ENCODE measurements at regions of chr16 and their contacts with region 1.

Region 1: DNA sequence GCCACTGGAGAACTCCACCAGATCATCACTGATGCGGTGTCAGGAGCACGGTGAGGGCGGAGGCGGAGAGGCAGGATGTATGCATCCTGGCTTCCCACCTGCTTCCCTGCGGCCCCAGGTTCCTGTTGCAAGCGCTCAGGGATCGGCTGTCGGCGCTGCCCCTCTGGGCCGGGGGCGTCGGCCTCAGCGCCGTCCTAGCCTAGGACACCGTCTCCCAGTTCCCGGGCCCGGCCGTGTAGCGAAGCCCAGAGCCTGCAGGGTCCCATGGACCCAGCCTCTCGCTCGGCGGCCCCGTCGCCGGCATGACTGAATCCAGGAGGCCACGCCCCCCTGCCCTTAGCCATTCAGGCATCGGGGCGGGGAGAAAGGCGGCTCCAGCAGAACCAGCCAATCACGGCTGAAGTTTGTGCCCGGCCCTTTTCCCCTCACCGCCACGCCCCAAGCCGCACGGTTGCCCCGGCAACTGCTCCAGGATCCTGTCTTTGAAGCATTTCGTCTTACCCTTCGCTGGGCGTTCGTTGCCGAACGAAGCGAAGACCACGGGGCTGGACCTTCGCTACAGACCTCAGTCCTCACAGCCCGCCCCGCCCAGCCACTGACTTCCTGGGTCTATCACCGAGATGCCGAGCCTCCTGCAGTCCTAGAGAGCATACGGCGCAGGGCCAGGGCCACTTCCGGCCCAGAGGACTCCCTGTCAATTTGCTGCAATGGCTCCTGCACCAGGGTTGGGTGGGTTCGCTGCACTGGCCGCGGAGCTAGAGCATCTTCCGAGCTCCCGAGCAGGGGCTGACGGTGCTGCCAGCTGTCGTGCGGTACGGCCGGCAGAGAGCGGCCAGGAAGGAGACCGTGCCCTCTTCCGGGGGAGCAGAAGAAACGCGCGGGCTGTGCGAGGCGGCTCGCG is 10.6 kb upstream of the ZNF213 start:
- DNase-seq: peak; percentile 87 to 98
- H3K4me3 ChIP-seq: peak overlapping the region; percentile 43 to 76 (median 67)
- H3K27ac ChIP-seq: no peak overlapping the region
- H3K4me1 ChIP-seq: peaks cover 0 to 11% (median 4%) of the 10 kb centered on the region in 4 experiments; a peak in 5 of 7 replicates
- H3K27me3 ChIP-seq: no peaks in the 10 kb centered on the region
- CTCF ChIP-seq: peak; percentile 10 to 16 (median 11); a peak in 3 of 4 replicates
- EP300 ChIP-seq: no peak
- POLR2A ChIP-seq: peak in 1 of 2 experiments; percentile 71; a peak in 1 of 3 replicates
- RAD21 ChIP-seq: peak in 1 of 2 experiments; percentile 21; a peak in 1 of 4 replicates

Region 2: GRCh38 chr16:3106205-3106928 is 17.9 kb before region 1 on chr16:
- CTCF ChIA-PET with region 1: interaction called, 619 read pairs
- POLR2A ChIA-PET with region 1: interaction called, 168 read pairs
- DNase-seq: peak in 1 of 2 experiments; percentile 97
- H3K4me3 ChIP-seq: peak overlapping the region; percentile 41 to 79 (median 64)
- H3K27ac ChIP-seq: peak overlapping the region; percentile 85
- H3K4me1 ChIP-seq: peaks cover 2 to 5% (median 4%) of the 10 kb centered on the region in 4 experiments; a peak in 5 of 7 replicates
- H3K27me3 ChIP-seq: no peaks in the 10 kb centered on the region
- CTCF ChIP-seq: no peak
- EP300 ChIP-seq: no peak
- POLR2A ChIP-seq: no peak; a peak in 1 of 3 replicates
- RAD21 ChIP-seq: no peak

Region 3: GRCh38 chr16:3112058-3112880 is 12.0 kb before region 1 on chr16 and contains the start of gene ZNF205:
- CTCF ChIA-PET with region 1: interaction called, 619 read pairs
- POLR2A ChIA-PET with region 1: interaction called, 168 read pairs
- DNase-seq: peak in 1 of 2 experiments; percentile 92
- H3K4me3 ChIP-seq: peak within 1 kb of the TSS; percentile 85 to 93 (median 92)
- H3K27ac ChIP-seq: peak within 1 kb of the TSS; percentile 51; the same call in 1 of the 2 replicates
- H3K4me1 ChIP-seq: peaks cover 0 to 15% (median 8%) of the 10 kb centered on the region in 4 experiments; a peak in 5 of 7 replicates
- H3K27me3 ChIP-seq: no peaks in the 10 kb centered on the region
- CTCF ChIP-seq: 0 out of 4 replicates have a peak, but pooled peaks of 1 of the 3 experiments have one; percentile 14
- EP300 ChIP-seq: peak in 1 of 2 experiments; percentile 79; a peak in 1 of 3 replicates
- POLR2A ChIP-seq: no peak
- RAD21 ChIP-seq: peak; percentile 17 to 36; a peak in 2 of 4 replicates
- total RNA-seq, gene ZNF205: 17.0 and 19.1 TPM in 2 replicates

Region 4: DNA sequence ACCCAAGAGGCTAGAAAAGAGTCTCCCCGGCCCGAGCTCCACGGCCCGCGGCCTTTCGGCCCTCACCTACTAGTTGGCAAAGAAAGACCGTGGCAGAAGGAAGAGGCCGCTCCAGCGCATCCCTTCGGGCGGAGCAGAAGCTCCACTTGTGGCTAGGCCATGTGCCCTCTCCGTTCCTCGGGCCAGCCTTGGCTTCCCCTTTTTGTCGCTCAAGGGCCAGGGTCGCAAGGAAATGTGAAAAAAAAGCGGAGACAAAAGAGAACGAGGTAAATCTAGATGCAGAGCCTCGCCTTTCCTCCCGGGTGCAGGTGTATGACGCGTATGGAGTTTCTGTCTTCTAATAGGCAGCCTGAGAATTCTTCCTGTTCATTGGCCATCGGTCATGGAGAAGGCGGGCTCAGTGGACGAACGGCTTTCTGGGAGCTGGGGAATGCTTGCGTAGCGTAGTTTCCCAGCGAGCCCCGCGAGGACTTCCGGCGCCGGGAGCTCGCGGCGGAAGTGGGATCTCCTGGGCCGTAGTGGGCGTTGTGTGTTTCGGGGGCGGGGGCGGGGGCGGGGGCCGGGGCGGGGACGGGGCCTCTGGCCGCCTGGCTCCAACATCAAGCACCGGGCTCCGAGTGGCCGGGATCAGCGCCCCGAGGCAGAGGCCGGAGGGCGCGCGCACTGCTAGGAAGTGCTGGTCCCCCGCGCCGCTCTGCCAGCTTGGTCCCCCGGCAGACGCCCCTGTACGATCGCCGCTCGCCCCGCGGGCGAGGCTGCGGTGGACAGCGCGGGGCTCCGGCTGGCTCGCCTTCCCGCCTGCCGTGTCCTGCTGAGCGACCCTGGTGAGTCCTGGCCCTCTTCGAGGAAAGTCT is 10.6 kb after region 1 on chr16 and contains the start of gene ZNF213:
- CTCF ChIA-PET with region 1: interaction called, 619 read pairs
- POLR2A ChIA-PET with region 1: interaction called, 42 read pairs
- DNase-seq: peak; percentile 88 to 93
- H3K4me3 ChIP-seq: peak within 1 kb of the TSS; percentile 86 to 96 (median 90)
- H3K27ac ChIP-seq: peak within 1 kb of the TSS; percentile 97
- H3K4me1 ChIP-seq: peaks cover 0 to 2% (median 0%) of the 10 kb centered on the region in 4 experiments; a peak in 1 of 7 replicates
- H3K27me3 ChIP-seq: no peaks in the 10 kb centered on the region
- CTCF ChIP-seq: no peak
- EP300 ChIP-seq: no peak
- POLR2A ChIP-seq: peak in 1 of 2 experiments; percentile 92; a peak in 2 of 3 replicates
- RAD21 ChIP-seq: no peak
- total RNA-seq, gene ZNF213: 6.9 and 7.3 TPM in 2 replicates